CD4-positive, alpha-beta memory T cell (primary cell): ENCODE measurements at regions of chr9 and their contacts with region 1.

Region 1: DNA sequence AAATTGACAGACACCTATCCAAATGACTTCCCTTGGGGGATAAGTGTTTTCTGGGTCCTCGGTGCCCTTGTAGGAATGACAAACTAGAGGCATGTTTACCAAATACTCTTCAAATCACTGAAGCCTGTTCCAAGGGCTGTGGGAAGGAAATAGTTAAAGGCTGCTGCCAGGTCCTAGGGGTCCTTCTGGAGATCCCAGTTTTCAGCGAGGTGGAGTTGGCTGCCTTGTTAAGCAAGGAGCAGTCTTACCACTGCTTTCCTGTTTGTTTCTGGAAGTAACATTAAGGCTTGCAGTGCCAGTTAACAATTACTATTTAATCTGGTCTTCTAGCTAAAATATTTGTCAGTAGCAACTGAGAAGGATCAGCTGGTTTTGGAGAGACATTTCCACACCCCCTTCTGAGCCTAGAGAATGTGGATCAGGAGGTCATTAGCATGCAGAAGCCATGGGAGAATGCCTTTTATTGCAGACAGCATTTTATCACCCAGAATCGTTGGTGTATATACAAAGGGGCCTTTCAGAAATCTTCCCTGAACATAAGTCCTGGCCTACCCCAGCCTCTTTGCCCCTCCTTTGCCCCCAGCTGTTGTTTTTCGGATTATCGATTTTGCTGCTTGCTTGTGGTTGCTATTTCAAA is 238.8 kb downstream of the DMAC1 start:
- DNase-seq: no peak
- H3K4me3 ChIP-seq: no peak overlapping the region
- H3K4me3 Mint-ChIP-seq: no peak overlapping the region
- H3K27ac ChIP-seq: no peak overlapping the region
- H3K27ac Mint-ChIP-seq: no peak overlapping the region
- H3K4me1 ChIP-seq: no peaks in the 10 kb centered on the region
- H3K4me1 Mint-ChIP-seq: peaks cover 0 to 1% (median 0%) of the 10 kb centered on the region in 4 donors
- H3K27me3 ChIP-seq: no peaks in the 10 kb centered on the region
- H3K27me3 Mint-ChIP-seq: peaks cover 4% of the 10 kb centered on the region in 2 donors

Region 2: GRCh38 chr9:7510199-7510598 is 50.6 kb before region 1 on chr9:
- CTCF ChIA-PET with region 1: no interaction called
- POLR2A ChIA-PET with region 1: no interaction called
- intact Hi-C with region 1: loop called (anchors 1 kb)
- DNase-seq: no peak
- H3K4me3 ChIP-seq: no peak overlapping the region
- H3K4me3 Mint-ChIP-seq: no peak overlapping the region
- H3K27ac ChIP-seq: no peak overlapping the region
- H3K27ac Mint-ChIP-seq: no peak overlapping the region
- H3K4me1 ChIP-seq: no peaks in the 10 kb centered on the region
- H3K4me1 Mint-ChIP-seq: no peaks in the 10 kb centered on the region
- H3K27me3 ChIP-seq: no peaks in the 10 kb centered on the region
- H3K27me3 Mint-ChIP-seq: peaks cover 2 to 4% of the 10 kb centered on the region in 2 donors